ENCODE measurements at regions of chr2 and their contacts with region 1.

Region 1: GRCh38 chr2:85728883-85729824 is 24.6 kb upstream of the ATOH8 start:
- DNase-seq: no peak
- ATAC-seq: peak; percentile 98
- H3K4me3 ChIP-seq: no peak overlapping the region
- H3K27ac ChIP-seq: no peak overlapping the region
- H3K4me1 ChIP-seq: no peaks in the 10 kb centered on the region; the same call in 1 of the 2 replicates
- H3K27me3 ChIP-seq: no peaks in the 10 kb centered on the region
- CTCF ChIP-seq: peak; percentile 96 to 99 (median 99); a peak in 5 of 6 replicates
- EP300 ChIP-seq: no peak
- POLR2A ChIP-seq: no peak
- RAD21 ChIP-seq: peak; percentile 94

Region 2: DNA sequence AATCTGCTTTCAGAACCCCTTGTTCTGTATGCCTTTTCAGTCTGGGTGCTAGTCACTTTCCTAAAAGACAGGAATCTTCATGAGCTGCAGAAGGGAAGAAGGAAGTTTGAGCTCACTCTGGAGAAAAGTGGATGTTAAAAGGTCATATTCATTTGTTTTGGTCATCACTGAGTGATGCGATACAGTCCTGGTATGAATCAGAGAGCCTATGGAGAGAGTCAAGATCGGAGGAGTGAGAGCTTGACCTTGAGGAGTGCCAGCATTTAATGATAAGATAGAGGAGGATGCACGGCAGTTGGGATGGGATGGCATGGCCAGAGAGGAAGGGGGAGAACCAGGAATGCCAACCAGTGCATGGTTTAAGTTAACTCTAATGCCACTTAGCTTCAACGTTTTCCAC is 93.5 kb before region 1 on chr2:
- CTCF ChIA-PET with region 1: interaction called, 28 read pairs
- POLR2A ChIA-PET with region 1: interaction called, 6 read pairs
- RAD21 ChIA-PET with region 1: interaction called, 15 read pairs
- SMC1A ChIA-PET with region 1: interaction called, 12 read pairs
- in situ Hi-C with region 1: no loop called
- intact Hi-C with region 1: loop called (anchors 5 kb)
- DNase-seq: no peak
- ATAC-seq: no peak
- H3K4me3 ChIP-seq: no peak overlapping the region
- H3K27ac ChIP-seq: no peak overlapping the region
- H3K4me1 ChIP-seq: no peaks in the 10 kb centered on the region
- H3K27me3 ChIP-seq: no peaks in the 10 kb centered on the region
- CTCF ChIP-seq: no peak
- EP300 ChIP-seq: no peak
- POLR2A ChIP-seq: no peak
- RAD21 ChIP-seq: no peak

Region 3: DNA sequence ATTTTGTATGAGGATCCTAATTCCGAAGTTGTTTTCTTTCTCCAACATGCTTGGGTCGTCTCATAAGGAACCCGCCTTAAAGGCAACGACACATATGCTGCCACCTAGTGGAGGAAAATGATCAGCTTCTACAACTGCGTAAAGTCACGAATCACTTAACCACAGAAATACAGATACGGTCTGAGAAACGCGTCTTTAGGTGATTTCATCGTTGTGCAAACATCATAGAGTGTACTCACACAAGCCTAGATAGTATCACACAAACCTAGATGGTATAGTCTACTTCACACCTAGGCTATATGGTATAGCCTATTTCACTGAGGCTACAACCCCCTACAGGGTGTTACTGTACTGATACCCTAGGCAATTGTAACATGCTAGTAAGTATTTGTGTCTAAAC is 21.9 kb before region 1 on chr2:
- CTCF ChIA-PET with region 1: interaction called, 64 read pairs
- POLR2A ChIA-PET with region 1: interaction called, 3 read pairs
- RAD21 ChIA-PET with region 1: interaction called, 12 read pairs
- SMC1A ChIA-PET with region 1: interaction called, 15 read pairs
- in situ Hi-C with region 1: no loop called
- intact Hi-C with region 1: no loop called
- DNase-seq: peak; percentile 75
- ATAC-seq: peak; percentile 79
- H3K4me3 ChIP-seq: no peak overlapping the region
- H3K27ac ChIP-seq: no peak overlapping the region
- H3K4me1 ChIP-seq: peaks cover 21% of the 10 kb centered on the region
- H3K27me3 ChIP-seq: no peaks in the 10 kb centered on the region
- CTCF ChIP-seq: peak; percentile 74 to 83 (median 82)
- EP300 ChIP-seq: 0 out of 4 replicates have a peak, but pooled peaks of 1 of the 2 experiments have one; percentile 34
- POLR2A ChIP-seq: no peak
- RAD21 ChIP-seq: peak; percentile 77

Region 4: DNA sequence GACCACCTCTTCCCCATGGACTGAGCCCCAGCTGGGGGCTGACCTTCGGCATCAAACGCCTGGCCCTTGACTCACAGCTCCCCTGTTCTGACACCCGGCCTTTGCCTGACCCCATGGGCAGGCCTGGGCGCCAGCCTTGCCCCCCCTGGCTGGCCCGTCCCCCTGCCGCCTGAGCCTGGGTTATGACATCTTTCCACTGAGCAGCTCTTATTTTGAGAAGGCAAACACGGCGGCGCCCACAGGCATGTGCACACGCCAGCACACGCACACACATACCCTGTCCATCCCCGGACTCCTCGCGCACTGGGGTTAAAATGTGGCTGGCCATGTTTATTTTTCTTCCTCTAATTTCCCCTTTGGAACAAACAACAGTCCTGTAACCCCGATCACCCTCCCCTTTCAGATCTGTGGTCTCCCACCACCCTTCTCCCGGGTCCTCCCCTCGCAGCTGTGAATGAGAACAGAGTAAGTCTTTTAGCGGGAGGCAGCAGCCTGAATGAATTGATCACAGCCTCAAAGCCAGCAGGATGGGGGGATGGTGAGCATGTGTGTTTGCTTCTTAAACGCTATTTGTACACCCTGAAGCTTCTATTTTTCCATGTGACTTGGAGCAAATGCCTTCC is 12.8 kb after region 1 on chr2:
- CTCF ChIA-PET with region 1: interaction called, 56 read pairs
- POLR2A ChIA-PET with region 1: interaction called, 4 read pairs
- RAD21 ChIA-PET with region 1: interaction called, 20 read pairs
- SMC1A ChIA-PET with region 1: interaction called, 30 read pairs
- in situ Hi-C with region 1: no loop called
- intact Hi-C with region 1: no loop called
- DNase-seq: no peak
- ATAC-seq: no peak
- H3K4me3 ChIP-seq: no peak overlapping the region
- H3K27ac ChIP-seq: no peak overlapping the region
- H3K4me1 ChIP-seq: peaks cover 3% of the 10 kb centered on the region; the same call in 1 of the 2 replicates
- H3K27me3 ChIP-seq: peaks cover 0 to 19% of the 10 kb centered on the region in 2 experiments; a peak in 3 of 4 replicates
- CTCF ChIP-seq: no peak
- EP300 ChIP-seq: no peak
- POLR2A ChIP-seq: no peak
- RAD21 ChIP-seq: no peak

Region 5: GRCh38 chr2:85806358-85807118 is 77.4 kb after region 1 on chr2:
- CTCF ChIA-PET with region 1: interaction called, 234 read pairs
- POLR2A ChIA-PET with region 1: interaction called, 8 read pairs
- RAD21 ChIA-PET with region 1: interaction called, 116 read pairs
- SMC1A ChIA-PET with region 1: interaction called, 106 read pairs
- in situ Hi-C with region 1: loop called (anchors 10 kb)
- intact Hi-C with region 1: no loop called
- DNase-seq: no peak
- ATAC-seq: peak; percentile 48
- H3K4me3 ChIP-seq: no peak overlapping the region
- H3K27ac ChIP-seq: no peak overlapping the region
- H3K4me1 ChIP-seq: no peaks in the 10 kb centered on the region
- H3K27me3 ChIP-seq: no peaks in the 10 kb centered on the region
- CTCF ChIP-seq: no peak
- EP300 ChIP-seq: no peak
- POLR2A ChIP-seq: no peak
- RAD21 ChIP-seq: no peak

Region 6: DNA sequence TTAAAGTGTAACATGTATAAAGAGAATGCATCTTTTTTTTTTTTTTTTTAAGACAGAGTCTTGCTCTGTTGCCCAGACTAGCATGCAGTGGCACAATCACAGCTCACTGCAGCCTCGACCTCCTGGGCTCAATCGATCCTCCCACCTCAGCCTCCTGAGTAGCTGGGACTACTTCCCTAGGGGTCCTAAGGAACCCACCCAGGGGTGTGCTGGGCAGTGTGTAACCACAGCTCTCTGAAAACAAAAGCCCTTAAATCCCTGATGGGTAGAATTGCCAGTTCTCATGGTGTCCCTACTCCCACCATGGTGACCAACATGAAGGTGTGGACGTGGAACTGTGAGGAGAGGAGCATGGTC is 265.2 kb after region 1 on chr2:
- CTCF ChIA-PET with region 1: no interaction called
- POLR2A ChIA-PET with region 1: no interaction called
- RAD21 ChIA-PET with region 1: no interaction called
- SMC1A ChIA-PET with region 1: no interaction called
- in situ Hi-C with region 1: no loop called
- intact Hi-C with region 1: no loop called
- DNase-seq: no peak
- ATAC-seq: peak; percentile 33
- H3K4me3 ChIP-seq: no peak overlapping the region; the same call in 1 of the 2 replicates
- H3K27ac ChIP-seq: peak overlapping the region; percentile 91
- H3K4me1 ChIP-seq: peaks cover 62% of the 10 kb centered on the region
- H3K27me3 ChIP-seq: no peaks in the 10 kb centered on the region
- CTCF ChIP-seq: no peak
- EP300 ChIP-seq: no peak
- POLR2A ChIP-seq: no peak
- RAD21 ChIP-seq: no peak